IMR-90 (cell line): ENCODE measurements at regions of chr13 and their contacts with region 1.

Region 1: GRCh38 chr13:43792076-43792881 is 5.5 kb upstream of the ENOX1 start:
- DNase-seq: no peak
- ATAC-seq: no peak
- H3K4me3 ChIP-seq: no peak overlapping the region
- H3K27ac ChIP-seq: no peak overlapping the region
- H3K4me1 ChIP-seq: no peaks in the 10 kb centered on the region
- H3K27me3 ChIP-seq: peaks cover 3% of the 10 kb centered on the region; the same call in 1 of the 2 replicates
- CTCF ChIP-seq: no peak
- POLR2A ChIP-seq: no peak
- RAD21 ChIP-seq: no peak

Region 2: GRCh38 chr13:43094901-43095300 is 697.4 kb before region 1 on chr13:
- CTCF ChIA-PET with region 1: no interaction called
- POLR2A ChIA-PET with region 1: no interaction called
- dilution Hi-C with region 1: no loop called
- in situ Hi-C with region 1: loop called (anchors 10 kb)
- intact Hi-C with region 1: no loop called
- DNase-seq: no peak
- ATAC-seq: no peak
- H3K4me3 ChIP-seq: no peak overlapping the region
- H3K27ac ChIP-seq: no peak overlapping the region
- H3K4me1 ChIP-seq: peaks cover 2% of the 10 kb centered on the region
- H3K27me3 ChIP-seq: no peaks in the 10 kb centered on the region
- CTCF ChIP-seq: no peak
- POLR2A ChIP-seq: no peak
- RAD21 ChIP-seq: no peak

Region 3: DNA sequence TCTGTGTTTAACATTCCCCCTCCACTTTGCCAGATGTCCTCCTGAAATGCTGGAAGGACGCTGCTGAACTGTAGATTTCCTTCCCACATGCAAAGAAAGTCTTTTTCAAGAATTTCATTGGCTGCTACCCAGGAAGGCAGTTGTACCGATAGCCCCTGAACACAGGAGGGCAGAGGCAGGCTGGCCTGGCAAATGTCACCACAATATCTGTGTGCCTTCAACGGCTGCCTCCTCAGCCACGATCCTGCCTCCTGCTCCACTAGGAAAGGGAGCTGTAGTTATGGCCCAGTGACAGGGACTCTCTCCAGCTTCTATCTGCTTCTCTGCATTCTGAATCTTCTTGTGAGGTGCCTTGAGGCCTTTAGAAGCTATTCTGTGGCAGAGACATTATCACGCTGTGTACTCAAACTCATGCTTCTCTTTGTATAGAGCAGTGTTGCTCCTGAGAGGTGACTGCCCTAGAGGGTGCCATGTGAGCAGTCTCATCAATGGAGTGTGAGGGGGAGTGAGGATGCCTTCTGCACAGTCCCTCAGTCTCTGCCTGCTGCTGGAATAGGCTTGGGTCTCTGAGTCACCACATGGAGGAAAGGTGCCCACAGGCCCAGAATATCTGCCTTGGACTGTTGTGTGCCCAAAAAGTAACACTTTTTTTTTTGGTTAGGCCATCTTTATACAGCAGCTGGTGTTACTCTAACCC is 489.1 kb before region 1 on chr13:
- CTCF ChIA-PET with region 1: no interaction called
- POLR2A ChIA-PET with region 1: no interaction called
- dilution Hi-C with region 1: no loop called
- in situ Hi-C with region 1: loop called (anchors 10 kb)
- intact Hi-C with region 1: loop called (anchors 1 kb)
- DNase-seq: peak; percentile 70
- ATAC-seq: peak; percentile 68
- H3K4me3 ChIP-seq: no peak overlapping the region
- H3K27ac ChIP-seq: peak overlapping the region; percentile 2; the same call in 1 of the 2 replicates
- H3K4me1 ChIP-seq: peaks cover 13% of the 10 kb centered on the region
- H3K27me3 ChIP-seq: no peaks in the 10 kb centered on the region
- CTCF ChIP-seq: peak; percentile 59
- POLR2A ChIP-seq: no peak
- RAD21 ChIP-seq: peak; percentile 64

Region 4: DNA sequence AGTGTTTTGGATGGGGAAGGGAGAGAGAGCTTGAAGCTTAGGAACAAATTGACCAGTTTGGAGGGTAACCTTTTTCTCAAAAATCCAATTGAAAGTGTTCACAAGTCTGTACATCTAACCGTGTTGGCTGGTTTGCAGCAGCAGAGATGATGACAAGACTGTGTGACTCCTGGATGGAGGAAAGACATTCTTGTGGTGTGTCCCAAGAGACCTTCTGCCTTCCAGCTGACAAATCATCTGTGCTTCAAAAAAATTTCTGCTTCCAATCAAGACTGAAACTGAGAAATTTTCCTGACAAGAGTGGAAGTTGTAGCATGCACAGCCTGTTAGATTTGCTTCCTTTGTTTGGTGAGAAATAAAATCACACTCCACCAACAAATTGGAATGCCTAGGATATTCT is 143.6 kb after region 1 on chr13:
- CTCF ChIA-PET with region 1: no interaction called
- POLR2A ChIA-PET with region 1: no interaction called
- dilution Hi-C with region 1: no loop called
- in situ Hi-C with region 1: no loop called
- intact Hi-C with region 1: no loop called
- DNase-seq: no peak
- ATAC-seq: no peak
- H3K4me3 ChIP-seq: no peak overlapping the region
- H3K27ac ChIP-seq: no peak overlapping the region
- H3K4me1 ChIP-seq: no peaks in the 10 kb centered on the region
- H3K27me3 ChIP-seq: peaks cover 27% of the 10 kb centered on the region
- CTCF ChIP-seq: no peak
- POLR2A ChIP-seq: no peak
- RAD21 ChIP-seq: no peak